ENCODE measurements at regions of chr11 and their contacts with region 1.

Region 1: GRCh38 chr11:128157423-128158298 is 429.7 kb downstream of the ETS1 start:
- DNase-seq: peak; percentile 33
- H3K4me3 ChIP-seq: peak overlapping the region in 1 of 4 donors; percentile 10
- H3K27ac ChIP-seq: no peak overlapping the region
- H3K4me1 ChIP-seq: no peaks in the 10 kb centered on the region
- H3K27me3 ChIP-seq: no peaks in the 10 kb centered on the region
- CTCF ChIP-seq: peak; percentile 78 to 94 (median 88)
- EP300 ChIP-seq: no peak
- POLR2A ChIP-seq: no peak

Region 2: GRCh38 chr11:127919206-127920000 is 238.3 kb before region 1 on chr11:
- in situ Hi-C with region 1: no loop called
- intact Hi-C with region 1: no loop called
- DNase-seq: no peak
- H3K4me3 ChIP-seq: no peak overlapping the region
- H3K27ac ChIP-seq: no peak overlapping the region
- H3K4me1 ChIP-seq: no peaks in the 10 kb centered on the region
- H3K27me3 ChIP-seq: no peaks in the 10 kb centered on the region
- CTCF ChIP-seq: no peak
- EP300 ChIP-seq: no peak
- POLR2A ChIP-seq: no peak

Region 3: GRCh38 chr11:128039140-128040021 is 118.3 kb before region 1 on chr11:
- in situ Hi-C with region 1: loop called in 1 of 4 experiments (anchors 10 kb)
- intact Hi-C with region 1: no loop called
- DNase-seq: peak; percentile 48
- H3K4me3 ChIP-seq: no peak overlapping the region
- H3K27ac ChIP-seq: no peak overlapping the region
- H3K4me1 ChIP-seq: peaks cover 0 to 8% (median 2%) of the 10 kb centered on the region in 4 donors
- H3K27me3 ChIP-seq: no peaks in the 10 kb centered on the region
- CTCF ChIP-seq: no peak
- EP300 ChIP-seq: no peak
- POLR2A ChIP-seq: no peak

Region 4: GRCh38 chr11:128261011-128261421 is 103.4 kb after region 1 on chr11:
- in situ Hi-C with region 1: no loop called
- intact Hi-C with region 1: no loop called
- DNase-seq: no peak
- H3K4me3 ChIP-seq: no peak overlapping the region
- H3K27ac ChIP-seq: no peak overlapping the region
- H3K4me1 ChIP-seq: no peaks in the 10 kb centered on the region
- H3K27me3 ChIP-seq: no peaks in the 10 kb centered on the region
- CTCF ChIP-seq: no peak
- EP300 ChIP-seq: no peak
- POLR2A ChIP-seq: no peak

Measured in transverse colon (tissue), 4 donors.